Calu3 (cell line): ENCODE measurements at regions of chr3 and their contacts with region 1.

Region 1: DNA sequence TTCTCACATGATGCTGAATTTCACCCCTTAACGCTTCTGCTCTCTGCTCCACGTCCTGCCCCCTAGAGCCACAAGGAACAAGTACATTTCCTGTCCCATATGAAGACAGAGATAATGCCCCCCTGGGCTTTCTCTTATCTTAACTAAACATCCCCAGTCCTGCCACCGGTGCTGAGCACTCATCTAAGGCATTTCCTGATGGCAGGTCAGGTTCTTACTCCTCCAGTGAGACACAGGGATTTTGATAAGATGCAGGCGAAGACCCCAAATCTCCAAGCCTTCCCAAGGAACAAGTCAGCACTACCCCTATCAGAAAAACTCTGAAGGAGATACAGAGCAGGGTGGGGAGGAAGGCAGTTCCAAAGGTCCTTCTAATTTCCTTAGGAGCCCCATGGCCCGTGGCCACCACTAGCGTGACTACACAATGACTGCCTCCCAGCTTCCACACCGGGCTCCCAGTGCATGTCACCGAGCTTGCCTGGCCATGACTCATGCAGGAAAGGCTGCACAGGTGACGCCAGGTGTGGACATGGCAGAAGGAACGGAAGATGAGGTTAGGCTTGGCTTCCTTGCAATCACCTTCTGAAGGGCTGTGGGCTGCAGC is 152.9 kb downstream of the XXYLT1 start:
- DNase-seq: peak; percentile 94
- H3K4me3 Mint-ChIP-seq: peak overlapping the region; percentile 42
- H3K27ac Mint-ChIP-seq: peak overlapping the region; percentile 95
- H3K4me1 Mint-ChIP-seq: peaks cover 59% of the 10 kb centered on the region
- H3K27me3 Mint-ChIP-seq: no peaks in the 10 kb centered on the region
- CTCF ChIP-seq: peak; percentile 44

Region 2: DNA sequence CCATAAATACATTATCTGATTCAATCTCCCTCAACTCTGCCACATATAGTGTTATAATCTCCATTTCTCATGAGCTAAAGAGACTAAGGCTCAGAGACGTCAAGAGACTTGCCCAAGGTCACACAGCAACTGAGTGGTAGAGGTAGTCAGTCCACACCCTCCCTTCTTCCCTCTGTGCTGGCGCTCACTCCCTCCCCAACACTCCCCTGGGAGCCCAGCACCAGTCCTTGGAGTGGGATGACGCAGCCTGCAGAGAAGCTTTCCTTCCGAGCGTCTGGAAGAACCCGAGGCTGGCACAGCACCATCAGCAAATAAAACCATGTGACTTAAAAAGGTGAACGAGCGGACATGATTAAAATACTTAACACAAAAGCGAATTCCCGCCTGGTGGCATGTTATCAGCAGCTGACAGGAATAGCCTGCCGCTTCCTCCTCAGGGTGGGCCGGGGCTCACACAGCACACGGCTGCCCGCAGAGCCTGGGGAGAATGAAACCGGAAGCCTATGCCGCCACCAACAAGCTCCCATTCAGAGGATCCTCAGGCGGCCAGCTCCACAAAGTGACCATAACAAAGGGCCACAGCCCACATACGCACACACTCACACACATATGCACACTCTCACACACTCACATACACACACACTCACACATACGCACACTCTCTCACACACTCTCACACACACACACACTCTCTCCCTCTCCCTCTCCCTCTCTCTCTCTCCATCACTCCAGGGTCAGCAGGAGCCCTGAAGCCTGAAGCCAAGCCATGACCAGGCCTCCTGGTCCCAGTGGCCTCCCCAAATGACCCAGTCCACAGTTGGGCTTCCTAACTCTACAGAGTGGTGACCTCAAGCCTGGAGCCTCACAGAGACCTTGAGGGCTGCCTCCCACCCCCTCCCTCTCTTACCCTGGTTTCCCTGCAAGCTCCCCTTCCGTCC is 32.4 kb after region 1 on chr3:
- CTCF ChIA-PET with region 1: no interaction called
- intact Hi-C with region 1: loop called (anchors 1 kb)
- DNase-seq: peak; percentile 81
- H3K4me3 Mint-ChIP-seq: peak overlapping the region; percentile 46
- H3K27ac Mint-ChIP-seq: peak overlapping the region; percentile 66
- H3K4me1 Mint-ChIP-seq: peaks cover 85% of the 10 kb centered on the region
- H3K27me3 Mint-ChIP-seq: no peaks in the 10 kb centered on the region
- CTCF ChIP-seq: no peak

Region 3: GRCh38 chr3:195197765-195198425 is 79.8 kb after region 1 on chr3:
- CTCF ChIA-PET with region 1: interaction called, 3 read pairs
- intact Hi-C with region 1: loop called (anchors 2 kb)
- DNase-seq: peak; percentile 30
- H3K4me3 Mint-ChIP-seq: no peak overlapping the region
- H3K27ac Mint-ChIP-seq: peak overlapping the region; percentile 75
- H3K4me1 Mint-ChIP-seq: peaks cover 21% of the 10 kb centered on the region
- H3K27me3 Mint-ChIP-seq: no peaks in the 10 kb centered on the region
- CTCF ChIP-seq: no peak